Spleen (tissue), 13 donors: ENCODE measurements at regions of chr18 and their contacts with region 1.

Region 1: GRCh38 chr18:80034068-80034851 is at the start of gene RBFA:
- DNase-seq: peak; percentile 100
- H3K4me3 ChIP-seq: peak within 1 kb of the TSS; percentile 72 to 92 (median 80)
- H3K27ac ChIP-seq: peak within 1 kb of the TSS; percentile 64 to 94 (median 87)
- H3K4me1 ChIP-seq: peaks cover 0 to 24% (median 18%) of the 10 kb centered on the region in 6 donors
- H3K27me3 ChIP-seq: no peaks in the 10 kb centered on the region
- CTCF ChIP-seq: peak in 9 of 11 experiments; percentile 16 to 53 (median 42)
- POLR2A ChIP-seq: peak in 1 of 3 donors; percentile 29
- total RNA-seq, gene RBFA: 16.4 to 31.1 (median 20.6) TPM

Region 2: GRCh38 chr18:79991494-79991893 is 42.8 kb before region 1 on chr18:
- intact Hi-C with region 1: loop called (anchors 5 kb)
- DNase-seq: no peak
- H3K4me3 ChIP-seq: no peak overlapping the region
- H3K27ac ChIP-seq: no peak overlapping the region
- H3K4me1 ChIP-seq: peaks cover 13 to 25% (median 20%) of the 10 kb centered on the region in 6 donors
- H3K27me3 ChIP-seq: no peaks in the 10 kb centered on the region
- CTCF ChIP-seq: no peak
- POLR2A ChIP-seq: no peak